Right cardiac atrium (tissue), 5 donors: ENCODE measurements at regions of chr19 and their contacts with region 1.

Region 1: DNA sequence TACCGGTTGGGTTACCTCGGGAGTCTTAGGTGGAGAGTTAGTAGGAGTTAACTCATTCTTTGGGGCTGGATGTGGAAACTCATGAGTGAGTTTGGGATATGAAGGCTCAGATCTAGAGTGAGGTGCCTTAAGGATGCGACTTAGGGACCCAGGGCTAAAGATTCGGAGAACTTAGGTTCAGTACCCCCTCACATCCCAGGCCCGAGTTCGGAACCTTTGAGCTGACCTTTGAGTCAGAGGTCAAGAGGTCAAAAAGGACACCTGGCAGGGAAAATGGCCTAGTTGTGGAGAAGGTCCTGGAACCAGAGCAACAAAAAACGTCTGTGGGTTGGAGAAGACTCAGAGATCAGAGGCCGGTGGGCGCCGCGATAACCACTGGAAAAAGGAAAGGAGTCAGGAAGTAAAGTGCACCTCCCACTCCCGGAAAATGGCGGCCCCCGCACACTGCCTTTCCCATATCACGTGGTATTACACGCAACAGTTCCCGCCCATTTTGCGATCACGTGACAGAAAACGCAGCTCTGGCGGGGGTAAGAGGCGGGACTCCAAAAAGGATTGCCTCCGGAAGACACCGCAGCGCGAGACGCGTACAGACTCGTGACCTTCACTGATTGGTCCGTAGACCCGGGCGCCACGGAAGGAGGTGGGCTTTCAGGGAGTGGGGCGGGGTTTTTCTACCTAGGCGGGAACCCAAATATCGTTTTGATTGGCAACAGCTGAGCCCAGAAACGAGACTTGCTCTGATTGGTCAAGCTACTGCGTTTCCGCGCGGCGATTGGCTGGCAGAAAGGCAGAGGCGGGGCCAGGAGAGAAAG is at the start of gene ACTMAP:
- DNase-seq: peak; percentile 99 to 100 (median 99)
- ATAC-seq: peak; percentile 97 to 98
- H3K4me3 ChIP-seq: peak within 1 kb of the TSS; percentile 73
- H3K27ac ChIP-seq: peak within 1 kb of the TSS; percentile 99
- H3K4me1 ChIP-seq: peaks cover 8% of the 10 kb centered on the region
- H3K27me3 ChIP-seq: no peaks in the 10 kb centered on the region
- total RNA-seq, gene ACTMAP: 4.5 to 6.1 (median 5.1) TPM

Region 2: DNA sequence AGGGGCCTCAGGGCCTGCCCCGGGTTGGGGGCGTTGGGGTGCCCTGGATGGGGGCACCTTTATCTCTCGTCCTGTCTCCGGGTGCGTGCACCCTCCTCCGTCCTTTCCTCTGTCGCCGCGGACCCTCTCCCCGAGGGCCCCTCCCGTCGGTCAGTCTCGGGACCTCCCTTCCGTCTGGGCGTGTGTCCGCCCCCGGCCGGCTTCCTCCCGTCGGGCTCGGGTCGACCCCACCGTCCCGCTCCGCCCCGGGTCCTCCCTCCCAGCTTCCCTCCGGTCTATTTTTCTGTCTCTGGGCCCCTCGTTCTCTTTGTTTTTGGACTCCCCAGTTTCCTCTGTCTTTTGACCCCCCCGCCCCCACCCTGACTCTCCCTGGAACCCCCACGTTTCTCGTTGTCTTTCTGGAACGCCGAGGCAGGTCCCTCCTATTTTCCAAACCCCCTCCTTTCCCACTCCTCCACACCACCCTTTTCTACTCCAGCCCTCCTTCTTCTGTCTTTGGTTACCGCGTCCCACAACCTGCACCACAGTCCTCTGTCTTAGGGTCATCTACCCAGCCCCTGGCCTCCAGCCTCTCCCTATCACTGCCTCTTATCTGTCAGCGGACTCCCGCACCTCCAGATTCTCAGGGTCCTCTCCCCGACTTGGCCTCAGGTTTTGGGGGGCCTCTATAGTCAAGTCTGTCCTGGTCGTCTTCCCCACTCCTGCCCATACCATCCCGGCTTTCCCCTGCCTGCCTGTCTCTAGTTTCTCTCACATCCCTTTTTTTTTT is 49.5 kb after region 1 on chr19:
- intact Hi-C with region 1: loop called in 1 of 4 experiments (anchors 5 kb)
- DNase-seq: peak; percentile 78 to 90 (median 89)
- ATAC-seq: peak; percentile 8 to 46
- H3K4me3 ChIP-seq: peak overlapping the region; percentile 89
- H3K27ac ChIP-seq: peak overlapping the region; percentile 63
- H3K4me1 ChIP-seq: peaks cover 39% of the 10 kb centered on the region
- H3K27me3 ChIP-seq: no peaks in the 10 kb centered on the region